ENCODE measurements at regions of chr6 and their contacts with region 1.

Region 1: GRCh38 chr6:12011276-12012076 is 636 bp upstream of the HIVEP1 start:
- DNase-seq: peak; percentile 97
- H3K4me3 Mint-ChIP-seq: peak overlapping the region; percentile 89
- H3K27ac Mint-ChIP-seq: peak overlapping the region; percentile 99
- H3K4me1 Mint-ChIP-seq: peaks cover 19% of the 10 kb centered on the region
- H3K27me3 Mint-ChIP-seq: no peaks in the 10 kb centered on the region
- CTCF ChIP-seq: no peak

Region 2: DNA sequence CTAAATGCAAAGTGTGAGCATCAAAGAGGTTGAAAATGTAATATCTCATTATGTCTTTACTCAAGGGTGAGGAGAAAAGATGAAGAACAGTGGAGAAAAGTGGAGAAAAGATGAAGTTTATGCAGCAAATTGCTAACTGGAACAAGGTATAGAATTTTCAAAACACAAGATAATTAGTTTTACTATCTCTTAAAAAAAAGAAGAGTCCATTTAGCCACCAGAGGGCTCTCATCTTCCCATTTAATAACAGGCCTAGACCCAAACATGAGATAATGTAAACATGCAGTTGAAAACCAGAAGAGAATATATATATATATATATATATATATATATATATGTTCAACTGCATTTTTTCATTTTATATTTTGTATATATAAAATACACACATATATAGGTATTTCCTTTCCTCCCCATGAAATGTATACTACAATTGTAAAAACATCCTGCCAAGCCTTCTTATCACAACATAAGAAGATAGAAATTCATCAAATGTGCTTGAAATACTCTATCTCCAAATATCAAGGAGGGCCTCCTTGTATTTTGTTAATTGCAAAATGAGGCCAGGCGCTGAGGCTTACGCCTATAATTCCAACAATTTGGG is 311.3 kb before region 1 on chr6:
- CTCF ChIA-PET with region 1: interaction called, 7 read pairs
- POLR2A ChIA-PET with region 1: interaction called, 16 read pairs
- intact Hi-C with region 1: loop called (anchors 1 kb)
- DNase-seq: peak; percentile 68
- H3K4me3 Mint-ChIP-seq: no peak overlapping the region
- H3K27ac Mint-ChIP-seq: no peak overlapping the region
- H3K4me1 Mint-ChIP-seq: peaks cover 25% of the 10 kb centered on the region
- H3K27me3 Mint-ChIP-seq: no peaks in the 10 kb centered on the region
- CTCF ChIP-seq: peak; percentile 37

Region 3: DNA sequence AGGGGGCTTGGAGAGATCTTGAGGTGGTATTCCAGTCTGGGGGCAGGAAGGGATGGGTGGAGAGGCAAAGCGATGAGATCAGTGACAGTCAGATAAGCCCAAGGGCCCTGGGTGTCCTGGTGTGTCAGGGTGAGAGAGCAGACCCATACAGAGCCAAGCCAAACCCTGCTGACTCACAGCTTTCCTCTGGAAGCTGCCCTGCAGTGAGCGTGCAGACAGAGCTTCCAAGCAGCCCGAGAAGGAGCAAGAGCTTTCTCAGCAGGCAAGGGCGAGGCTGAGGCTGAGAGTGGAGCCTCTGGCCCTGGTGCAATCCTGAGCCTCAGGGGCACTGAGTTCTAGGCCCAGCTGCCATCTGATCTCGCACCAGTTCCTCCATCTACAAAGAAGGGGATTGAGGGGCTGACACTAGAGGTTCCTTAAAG is 90.4 kb before region 1 on chr6:
- CTCF ChIA-PET with region 1: interaction called, 3 read pairs
- POLR2A ChIA-PET with region 1: interaction called, 8 read pairs
- intact Hi-C with region 1: loop called (anchors 1 kb)
- DNase-seq: peak; percentile 86
- H3K4me3 Mint-ChIP-seq: no peak overlapping the region
- H3K27ac Mint-ChIP-seq: peak overlapping the region; percentile 76
- H3K4me1 Mint-ChIP-seq: peaks cover 17% of the 10 kb centered on the region
- H3K27me3 Mint-ChIP-seq: no peaks in the 10 kb centered on the region
- CTCF ChIP-seq: no peak

Region 4: GRCh38 chr6:12024699-12025434 is 13.4 kb after region 1 on chr6:
- CTCF ChIA-PET with region 1: no interaction called
- POLR2A ChIA-PET with region 1: interaction called, 30 read pairs
- intact Hi-C with region 1: no loop called
- DNase-seq: no peak
- H3K4me3 Mint-ChIP-seq: no peak overlapping the region
- H3K27ac Mint-ChIP-seq: no peak overlapping the region
- H3K4me1 Mint-ChIP-seq: no peaks in the 10 kb centered on the region
- H3K27me3 Mint-ChIP-seq: no peaks in the 10 kb centered on the region
- CTCF ChIP-seq: no peak

Region 5: GRCh38 chr6:12039540-12040459 is 28.3 kb after region 1 on chr6:
- CTCF ChIA-PET with region 1: interaction called, 5 read pairs
- POLR2A ChIA-PET with region 1: interaction called, 12 read pairs
- intact Hi-C with region 1: no loop called
- DNase-seq: no peak
- H3K4me3 Mint-ChIP-seq: no peak overlapping the region
- H3K27ac Mint-ChIP-seq: no peak overlapping the region
- H3K4me1 Mint-ChIP-seq: peaks cover 20% of the 10 kb centered on the region
- H3K27me3 Mint-ChIP-seq: no peaks in the 10 kb centered on the region
- CTCF ChIP-seq: no peak

Region 6: DNA sequence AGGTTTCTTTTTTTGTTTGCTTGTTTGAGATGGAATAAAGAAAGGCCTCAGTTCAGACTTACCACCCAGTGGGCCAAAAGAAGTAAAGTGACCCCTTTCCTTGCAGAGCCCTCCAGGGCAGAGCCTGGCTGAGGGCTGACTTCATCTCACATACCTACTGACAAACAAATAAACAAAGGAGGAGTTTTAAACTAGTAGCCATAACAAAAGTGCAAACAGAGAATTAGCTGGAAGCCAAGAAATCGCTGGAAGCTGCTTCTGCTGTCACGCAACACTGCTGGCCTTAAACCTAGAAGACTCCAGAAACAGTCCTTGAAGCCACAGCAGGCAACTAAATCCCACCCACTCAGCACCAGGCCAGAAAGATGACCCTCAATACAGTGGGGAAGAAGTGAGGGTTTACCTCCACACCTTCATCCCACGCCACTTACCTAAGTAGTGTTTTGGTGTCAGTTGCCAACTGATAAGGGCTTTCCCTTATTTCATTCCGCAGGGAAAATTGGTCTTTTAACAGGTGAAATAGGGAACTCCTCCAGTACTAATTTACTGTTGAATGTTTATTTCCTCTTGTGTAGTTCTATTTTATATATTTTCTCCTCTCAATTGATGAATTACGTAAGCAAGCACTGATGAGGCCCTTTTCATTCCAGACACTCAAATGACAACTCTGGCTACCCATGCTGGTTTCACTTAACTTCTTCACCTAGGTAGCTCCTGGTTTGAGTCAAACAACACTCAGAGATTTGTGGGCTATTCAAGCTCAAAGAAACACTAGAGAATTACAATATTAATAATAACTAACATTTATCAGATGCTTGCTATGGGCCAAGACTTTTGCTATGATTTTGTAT is 324.9 kb after region 1 on chr6:
- CTCF ChIA-PET with region 1: no interaction called
- POLR2A ChIA-PET with region 1: no interaction called
- intact Hi-C with region 1: no loop called
- DNase-seq: no peak
- H3K4me3 Mint-ChIP-seq: no peak overlapping the region
- H3K27ac Mint-ChIP-seq: no peak overlapping the region
- H3K4me1 Mint-ChIP-seq: peaks cover 5% of the 10 kb centered on the region
- H3K27me3 Mint-ChIP-seq: no peaks in the 10 kb centered on the region
- CTCF ChIP-seq: no peak